Activated naive CD4-positive, alpha-beta T cell treated with anti-CD3 and anti-CD28 coated beads for 36 hours (primary cell): ENCODE measurements at regions of chr14 and their contacts with region 1.

Region 1: DNA sequence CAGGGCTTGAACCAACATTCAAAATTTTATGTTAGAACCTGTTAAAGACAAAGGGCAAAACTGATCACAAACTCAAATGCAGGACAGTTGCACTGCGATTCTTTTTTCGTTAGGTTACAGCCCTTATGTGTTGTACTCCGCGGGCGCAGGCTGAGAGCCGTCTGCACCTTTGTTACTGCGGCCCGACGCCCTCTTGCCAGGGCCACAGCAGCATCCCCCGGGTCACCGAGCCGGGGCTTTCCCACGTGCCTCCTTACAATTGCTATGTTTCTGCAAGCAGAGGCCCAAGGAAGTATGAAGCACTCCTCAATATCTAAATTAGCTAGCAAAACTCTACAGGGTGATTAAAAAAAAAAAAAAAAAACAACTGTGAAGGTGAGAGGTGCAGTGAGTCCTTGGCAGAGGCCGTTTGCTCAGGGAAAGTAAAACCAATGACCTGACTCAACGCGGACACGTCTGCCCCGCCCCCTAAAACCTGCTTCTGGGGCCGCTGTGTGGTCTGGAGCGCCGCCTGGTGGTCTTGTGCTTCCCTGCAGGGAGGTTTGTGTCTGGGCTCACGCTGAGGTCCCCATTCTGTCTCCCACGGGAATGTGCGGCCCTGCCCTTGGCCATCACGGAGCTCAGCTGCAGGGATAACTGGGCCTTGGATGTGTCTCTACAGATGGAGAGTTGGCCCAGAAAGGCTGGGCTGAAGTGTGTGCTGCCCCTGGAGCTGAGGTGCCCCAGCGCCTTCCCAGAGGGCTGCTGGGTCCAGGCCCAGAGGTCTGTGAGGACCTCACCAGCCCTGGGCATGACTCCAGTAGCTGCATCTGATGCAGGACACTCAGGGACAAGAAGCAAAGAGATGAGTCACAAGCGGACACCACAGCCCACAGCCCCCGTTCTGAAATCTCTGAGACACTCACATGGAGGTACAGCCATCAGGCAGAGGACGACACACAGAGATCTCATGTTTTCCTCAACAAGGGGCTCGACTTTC is 418.5 kb downstream of the TMEM121 start:
- DNase-seq: peak; percentile 91
- H3K4me3 Mint-ChIP-seq: no peak overlapping the region
- H3K27ac Mint-ChIP-seq: no peak overlapping the region
- H3K4me1 Mint-ChIP-seq: peaks cover 8% of the 10 kb centered on the region
- H3K27me3 Mint-ChIP-seq: no peaks in the 10 kb centered on the region

Region 2: DNA sequence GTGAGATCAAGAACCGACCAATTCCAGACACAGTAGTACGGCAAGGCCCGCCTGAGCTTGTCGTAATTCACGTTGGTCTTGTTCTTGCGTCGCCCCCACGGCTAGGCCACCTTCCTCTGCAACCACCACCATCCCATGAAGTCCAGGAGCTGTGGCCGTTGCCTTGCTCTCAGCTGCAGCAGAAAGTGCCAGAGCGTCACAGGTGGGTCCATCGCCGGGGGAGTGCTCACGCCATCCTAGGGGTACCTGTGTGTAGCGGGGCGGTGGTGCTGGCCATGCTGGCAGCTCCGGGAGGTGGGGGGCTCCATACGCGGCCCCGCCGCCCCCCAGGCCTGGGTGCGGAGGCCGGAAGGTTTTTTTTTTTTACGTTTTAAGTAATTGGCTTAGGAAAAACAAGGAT is 395.4 kb before region 1 on chr14:
- CTCF ChIA-PET with region 1: interaction called, 3 read pairs
- intact Hi-C with region 1: loop called (anchors 10 kb)
- DNase-seq: no peak
- H3K4me3 Mint-ChIP-seq: no peak overlapping the region
- H3K27ac Mint-ChIP-seq: no peak overlapping the region
- H3K4me1 Mint-ChIP-seq: no peaks in the 10 kb centered on the region
- H3K27me3 Mint-ChIP-seq: peaks cover 1% of the 10 kb centered on the region

Region 3: GRCh38 chr14:105682940-105683570 is 261.9 kb before region 1 on chr14:
- CTCF ChIA-PET with region 1: no interaction called
- intact Hi-C with region 1: loop called (anchors 2 kb)
- DNase-seq: no peak
- H3K4me3 Mint-ChIP-seq: no peak overlapping the region
- H3K27ac Mint-ChIP-seq: no peak overlapping the region
- H3K4me1 Mint-ChIP-seq: no peaks in the 10 kb centered on the region
- H3K27me3 Mint-ChIP-seq: no peaks in the 10 kb centered on the region

Region 4: DNA sequence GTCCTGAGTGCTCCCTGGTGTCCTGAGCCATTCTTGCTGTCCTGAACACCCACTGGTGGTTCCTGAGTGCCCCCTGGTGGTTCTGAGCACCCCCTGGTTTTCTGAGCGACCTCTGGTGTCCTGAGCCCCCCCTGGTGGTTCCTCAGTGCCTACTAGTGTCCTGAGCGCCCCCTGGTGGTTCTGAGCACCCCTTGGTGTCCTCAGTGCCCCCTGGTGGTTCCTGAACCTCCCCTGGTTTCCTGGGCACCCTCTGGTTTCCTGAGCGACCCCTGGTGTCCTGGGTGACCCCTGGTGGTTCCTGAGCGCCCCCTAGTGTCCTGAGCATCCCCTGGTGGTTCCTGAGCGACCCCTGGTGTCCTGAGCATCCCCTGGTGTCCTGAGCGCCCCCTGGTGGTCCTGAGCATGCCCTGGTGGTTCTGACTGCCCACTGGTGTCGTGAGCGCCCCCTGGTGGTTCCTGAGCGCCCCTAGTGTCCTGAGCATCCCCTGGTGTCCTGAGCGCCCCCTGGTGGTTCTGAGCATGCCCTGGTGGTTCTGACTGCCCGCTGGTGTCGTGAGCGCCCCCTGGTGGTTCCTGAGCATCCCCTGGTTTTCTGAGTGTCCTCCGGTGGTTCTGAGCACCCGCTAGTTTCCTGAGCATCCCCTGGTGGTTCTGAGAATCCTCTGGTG is 54.6 kb after region 1 on chr14:
- CTCF ChIA-PET with region 1: interaction called, 10 read pairs
- intact Hi-C with region 1: loop called (anchors 1 kb)
- DNase-seq: peak; percentile 96
- H3K4me3 Mint-ChIP-seq: peak overlapping the region; percentile 60
- H3K27ac Mint-ChIP-seq: peak overlapping the region; percentile 75
- H3K4me1 Mint-ChIP-seq: peaks cover 45% of the 10 kb centered on the region
- H3K27me3 Mint-ChIP-seq: no peaks in the 10 kb centered on the region

Region 5: DNA sequence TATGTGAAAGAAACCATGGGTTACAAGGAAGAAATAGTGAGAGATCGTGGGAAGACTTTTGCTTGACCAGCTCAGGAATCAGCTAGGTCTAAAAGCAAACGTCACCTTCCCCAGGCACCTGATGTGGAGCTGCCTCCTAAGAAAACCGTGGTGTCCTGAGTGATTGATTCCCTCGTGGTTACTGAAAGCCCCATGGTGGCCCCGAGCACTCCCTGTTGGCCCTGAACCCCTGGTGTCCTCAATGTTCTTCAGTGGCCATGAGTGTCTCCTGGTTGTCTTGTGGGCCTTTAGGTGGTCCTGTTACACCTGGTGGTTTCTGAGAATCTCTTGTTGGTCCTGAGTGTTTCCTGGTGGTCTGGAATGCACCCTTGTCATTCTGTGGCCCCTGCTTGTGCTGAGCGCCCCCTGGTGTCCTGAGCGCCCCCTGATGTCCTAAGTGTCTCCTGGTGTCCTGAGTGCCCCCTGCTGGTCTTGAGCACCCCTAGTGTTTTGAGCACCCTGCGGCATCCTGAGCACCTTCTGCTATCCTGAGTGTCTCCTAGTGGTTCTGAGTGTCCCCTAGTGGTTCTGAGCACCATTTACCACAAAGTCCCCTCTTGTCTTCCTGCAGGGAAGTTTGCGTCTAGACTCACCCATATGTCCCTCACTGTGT is 100.2 kb after region 1 on chr14:
- CTCF ChIA-PET with region 1: no interaction called
- intact Hi-C with region 1: loop called (anchors 1 kb)
- DNase-seq: peak; percentile 96
- H3K4me3 Mint-ChIP-seq: no peak overlapping the region
- H3K27ac Mint-ChIP-seq: peak overlapping the region; percentile 81
- H3K4me1 Mint-ChIP-seq: peaks cover 14% of the 10 kb centered on the region
- H3K27me3 Mint-ChIP-seq: peaks cover 5% of the 10 kb centered on the region

Region 6: GRCh38 chr14:106062502-106063272 is 117.8 kb after region 1 on chr14:
- CTCF ChIA-PET with region 1: interaction called, 3 read pairs
- intact Hi-C with region 1: loop called (anchors 1 kb)
- DNase-seq: no peak
- H3K4me3 Mint-ChIP-seq: no peak overlapping the region
- H3K27ac Mint-ChIP-seq: no peak overlapping the region
- H3K4me1 Mint-ChIP-seq: peaks cover 15% of the 10 kb centered on the region
- H3K27me3 Mint-ChIP-seq: peaks cover 9% of the 10 kb centered on the region